Mammary epithelial cell (primary cell): ENCODE measurements at regions of chr18 and their contacts with region 1.

Region 1: DNA sequence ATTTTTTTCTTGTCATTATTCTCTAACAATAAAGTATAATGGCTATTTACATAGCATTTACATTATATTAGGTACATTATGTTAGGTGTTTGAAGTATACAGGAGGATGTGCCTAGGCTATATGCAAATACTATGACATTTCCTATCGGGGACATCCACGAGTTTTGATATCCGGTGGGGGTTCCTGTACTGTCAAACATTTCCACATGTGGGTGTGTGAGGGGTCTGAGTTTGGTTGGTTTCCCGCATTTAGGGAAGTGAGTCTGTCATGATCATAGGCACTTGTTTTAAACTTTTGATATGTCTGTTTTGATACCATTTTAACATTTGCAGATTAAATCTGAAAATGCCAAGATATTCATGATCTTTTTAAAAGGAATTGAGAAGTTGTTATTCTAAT is 76.0 kb downstream of the CEP192 start:
- DNase-seq: no peak
- H3K4me3 ChIP-seq: no peak overlapping the region
- H3K27ac ChIP-seq: no peak overlapping the region
- H3K4me1 ChIP-seq: no peaks in the 10 kb centered on the region
- H3K27me3 ChIP-seq: no peaks in the 10 kb centered on the region
- CTCF ChIP-seq: no peak

Region 2: GRCh38 chr18:13019301-13019700 is 47.8 kb before region 1 on chr18:
- CTCF ChIA-PET with region 1: no interaction called
- dilution Hi-C with region 1: no loop called
- in situ Hi-C with region 1: loop called in 1 of 2 experiments (anchors 10 kb)
- intact Hi-C with region 1: no loop called
- DNase-seq: peak; percentile 85
- H3K4me3 ChIP-seq: no peak overlapping the region
- H3K27ac ChIP-seq: peak overlapping the region; percentile 79
- H3K4me1 ChIP-seq: peaks cover 13% of the 10 kb centered on the region
- H3K27me3 ChIP-seq: no peaks in the 10 kb centered on the region
- CTCF ChIP-seq: no peak

Region 3: GRCh38 chr18:13032173-13032572 is 35.0 kb before region 1 on chr18:
- CTCF ChIA-PET with region 1: no interaction called
- dilution Hi-C with region 1: loop called (anchors 5 kb)
- in situ Hi-C with region 1: no loop called
- intact Hi-C with region 1: no loop called
- DNase-seq: no peak
- H3K4me3 ChIP-seq: no peak overlapping the region
- H3K27ac ChIP-seq: no peak overlapping the region
- H3K4me1 ChIP-seq: peaks cover 4% of the 10 kb centered on the region
- H3K27me3 ChIP-seq: no peaks in the 10 kb centered on the region
- CTCF ChIP-seq: no peak